Naive thymus-derived CD4-positive, alpha-beta T cell (primary cell): ENCODE measurements at regions of chr2 and their contacts with region 1.

Region 1: GRCh38 chr2:73071360-73072133 is at the start of gene SFXN5:
- DNase-seq: peak; percentile 85 to 98 (median 90)
- ATAC-seq: peak; percentile 93
- H3K4me3 ChIP-seq: peak within 1 kb of the TSS; percentile 98
- H3K4me3 Mint-ChIP-seq: peak within 1 kb of the TSS; percentile 82 to 98 (median 93)
- H3K27ac ChIP-seq: peak within 1 kb of the TSS; percentile 81
- H3K27ac Mint-ChIP-seq: peak within 1 kb of the TSS; percentile 86 to 96 (median 94)
- H3K4me1 ChIP-seq: peaks cover 5 to 7% of the 10 kb centered on the region in 2 donors
- H3K4me1 Mint-ChIP-seq: peaks cover 14 to 39% (median 26%) of the 10 kb centered on the region in 7 donors
- H3K27me3 ChIP-seq: no peaks in the 10 kb centered on the region
- H3K27me3 Mint-ChIP-seq: peaks cover 0 to 18% (median 0%) of the 10 kb centered on the region in 5 donors
- total RNA-seq, gene SFXN5: 8.8 to 17.4 (median 10.9) TPM

Region 2: DNA sequence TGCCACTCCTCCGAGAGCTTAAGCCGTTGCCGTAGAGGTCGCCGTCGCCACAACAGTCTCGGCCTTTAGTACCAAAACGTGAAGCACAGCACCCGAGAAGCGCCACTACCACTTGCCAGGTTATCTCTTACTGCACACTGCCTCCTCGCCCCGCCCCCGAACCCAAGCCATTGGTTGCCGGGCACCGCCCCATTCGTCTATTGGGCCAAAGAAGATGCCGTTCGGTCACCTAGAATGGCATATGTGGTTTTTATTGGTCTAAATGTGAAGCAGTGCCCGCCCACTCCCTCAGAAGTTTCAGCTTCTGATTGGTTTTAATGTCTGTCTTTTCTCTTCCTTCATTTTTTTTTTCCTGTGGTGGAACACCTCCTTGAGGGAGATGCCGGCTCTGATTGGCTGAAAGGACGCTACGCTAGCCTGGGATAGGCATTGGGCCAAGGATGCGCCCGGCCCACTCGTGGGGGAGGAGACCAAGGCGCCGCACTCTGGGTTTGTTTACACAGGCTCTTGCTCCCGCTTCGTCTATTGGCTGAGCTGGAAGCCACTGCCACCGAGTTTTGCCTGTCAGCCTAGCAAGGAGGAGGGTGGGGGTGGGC is 1844.5 kb before region 1 on chr2 and contains the start of gene PAIP2B:
- CTCF ChIA-PET with region 1: no interaction called
- POLR2A ChIA-PET with region 1: no interaction called
- intact Hi-C with region 1: loop called in 1 of 2 experiments (anchors 2 kb)
- DNase-seq: peak; percentile 88 to 99 (median 99)
- ATAC-seq: peak; percentile 95
- H3K4me3 ChIP-seq: peak within 1 kb of the TSS; percentile 80
- H3K4me3 Mint-ChIP-seq: peak within 1 kb of the TSS; percentile 92 to 99 (median 97)
- H3K27ac ChIP-seq: peak within 1 kb of the TSS; percentile 82
- H3K27ac Mint-ChIP-seq: peak within 1 kb of the TSS; percentile 84 to 98 (median 92)
- H3K4me1 ChIP-seq: peaks cover 8 to 11% of the 10 kb centered on the region in 2 donors
- H3K4me1 Mint-ChIP-seq: peaks cover 13 to 34% (median 22%) of the 10 kb centered on the region in 7 donors
- H3K27me3 ChIP-seq: no peaks in the 10 kb centered on the region
- H3K27me3 Mint-ChIP-seq: peaks cover 0 to 28% (median 6%) of the 10 kb centered on the region in 5 donors
- total RNA-seq, gene PAIP2B: 1.3 to 14.1 (median 5.0) TPM

Region 3: GRCh38 chr2:72915907-72916742 is 155.4 kb before region 1 on chr2:
- CTCF ChIA-PET with region 1: no interaction called
- POLR2A ChIA-PET with region 1: no interaction called
- intact Hi-C with region 1: loop called in 1 of 2 experiments (anchors 1 kb)
- DNase-seq: peak in 7 of 9 donors; percentile 27 to 53 (median 41)
- ATAC-seq: peak; percentile 62
- H3K4me3 ChIP-seq: peak overlapping the region; percentile 47
- H3K4me3 Mint-ChIP-seq: peak overlapping the region; percentile 56 to 89 (median 82)
- H3K27ac ChIP-seq: no peak overlapping the region
- H3K27ac Mint-ChIP-seq: no peak overlapping the region
- H3K4me1 ChIP-seq: peaks cover 13 to 31% of the 10 kb centered on the region in 2 donors
- H3K4me1 Mint-ChIP-seq: peaks cover 8 to 32% (median 28%) of the 10 kb centered on the region in 7 donors
- H3K27me3 ChIP-seq: peaks cover 17 to 44% of the 10 kb centered on the region in 2 donors
- H3K27me3 Mint-ChIP-seq: peaks cover 57 to 83% (median 58%) of the 10 kb centered on the region in 5 donors

Region 4: GRCh38 chr2:73085691-73086360 is 14.3 kb after region 1 on chr2:
- CTCF ChIA-PET with region 1: interaction called, 4 read pairs
- POLR2A ChIA-PET with region 1: no interaction called
- intact Hi-C with region 1: loop called in 1 of 2 experiments (anchors 1 kb)
- DNase-seq: peak; percentile 52 to 79 (median 71)
- ATAC-seq: peak; percentile 92
- H3K4me3 ChIP-seq: no peak overlapping the region
- H3K4me3 Mint-ChIP-seq: no peak overlapping the region
- H3K27ac ChIP-seq: no peak overlapping the region
- H3K27ac Mint-ChIP-seq: peak overlapping the region in 1 of 9 donors; percentile 13
- H3K4me1 ChIP-seq: no peaks in the 10 kb centered on the region
- H3K4me1 Mint-ChIP-seq: peaks cover 0 to 2% (median 0%) of the 10 kb centered on the region in 7 donors
- H3K27me3 ChIP-seq: no peaks in the 10 kb centered on the region
- H3K27me3 Mint-ChIP-seq: no peaks in the 10 kb centered on the region

Region 5: GRCh38 chr2:73176881-73177644 is 105.5 kb after region 1 on chr2:
- CTCF ChIA-PET with region 1: interaction called, 9 read pairs
- POLR2A ChIA-PET with region 1: no interaction called
- intact Hi-C with region 1: loop called (anchors 1 to 5 kb)
- DNase-seq: peak; percentile 74 to 92 (median 88)
- ATAC-seq: peak; percentile 96
- H3K4me3 ChIP-seq: peak overlapping the region; percentile 67
- H3K4me3 Mint-ChIP-seq: peak overlapping the region; percentile 83 to 92 (median 90)
- H3K27ac ChIP-seq: no peak overlapping the region
- H3K27ac Mint-ChIP-seq: peak overlapping the region in 5 of 9 donors; percentile 28 to 88 (median 51)
- H3K4me1 ChIP-seq: peaks cover 15 to 20% of the 10 kb centered on the region in 2 donors
- H3K4me1 Mint-ChIP-seq: peaks cover 9 to 17% (median 12%) of the 10 kb centered on the region in 7 donors
- H3K27me3 ChIP-seq: peaks cover 0 to 3% of the 10 kb centered on the region in 2 donors
- H3K27me3 Mint-ChIP-seq: peaks cover 22 to 72% (median 29%) of the 10 kb centered on the region in 5 donors

Region 6: DNA sequence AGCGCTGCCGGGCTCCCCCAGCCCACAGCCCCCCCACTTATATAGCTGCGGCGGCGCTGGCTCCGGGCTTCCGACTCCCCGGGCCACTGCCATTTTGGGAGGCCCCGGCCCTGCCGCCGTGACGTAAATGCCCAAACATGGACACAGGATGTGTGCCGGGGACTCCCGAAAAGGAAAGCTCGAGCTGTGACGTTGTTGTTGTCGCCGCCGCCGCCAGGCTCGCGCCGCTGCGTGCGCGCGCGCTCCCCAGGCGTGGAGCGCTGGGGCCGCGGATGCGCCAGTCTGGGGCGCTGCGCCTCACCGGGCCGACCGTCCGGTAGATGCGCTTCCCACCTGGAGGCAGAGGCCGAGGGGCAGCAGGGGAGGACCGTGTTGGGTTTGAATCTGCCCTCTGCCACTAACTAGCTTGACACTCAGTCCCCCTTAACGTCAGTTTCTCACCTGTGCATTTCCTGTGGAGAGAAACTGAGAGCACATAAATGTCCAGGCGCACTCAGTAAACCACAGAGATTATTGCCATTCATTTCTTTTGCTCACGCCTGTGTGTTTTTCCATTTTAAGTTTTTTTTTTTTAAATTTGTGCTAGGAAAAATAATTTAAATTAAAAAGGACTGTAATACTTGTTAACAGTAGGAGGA is 222.1 kb after region 1 on chr2 and contains the start of gene EGR4:
- CTCF ChIA-PET with region 1: no interaction called
- POLR2A ChIA-PET with region 1: no interaction called
- intact Hi-C with region 1: loop called in 1 of 2 experiments (anchors 2 kb)
- DNase-seq: peak; percentile 70 to 96 (median 88)
- ATAC-seq: peak; percentile 94
- H3K4me3 ChIP-seq: peak within 1 kb of the TSS; percentile 72
- H3K4me3 Mint-ChIP-seq: peak within 1 kb of the TSS; percentile 59 to 82 (median 72)
- H3K27ac ChIP-seq: no peak within 1 kb of the TSS
- H3K27ac Mint-ChIP-seq: peak within 1 kb of the TSS in 4 of 9 donors; percentile 9 to 81 (median 30)
- H3K4me1 ChIP-seq: peaks cover 17 to 18% of the 10 kb centered on the region in 2 donors
- H3K4me1 Mint-ChIP-seq: peaks cover 7 to 25% (median 14%) of the 10 kb centered on the region in 7 donors
- H3K27me3 ChIP-seq: peaks cover 11 to 25% of the 10 kb centered on the region in 2 donors
- H3K27me3 Mint-ChIP-seq: peaks cover 48 to 83% (median 66%) of the 10 kb centered on the region in 5 donors
- total RNA-seq, gene EGR4: 0.15 to 0.16 (median 0.15) TPM in 3 of 5 experiments, not detected in the others

Region 7: GRCh38 chr2:74458132-74458925 is 1386.8 kb after region 1 on chr2 and contains the start of gene WBP1:
- CTCF ChIA-PET with region 1: no interaction called
- POLR2A ChIA-PET with region 1: no interaction called
- intact Hi-C with region 1: loop called in 1 of 2 experiments (anchors 5 kb)
- DNase-seq: peak in 8 of 9 donors; percentile 85 to 100 (median 100)
- ATAC-seq: peak; percentile 89
- H3K4me3 ChIP-seq: peak within 1 kb of the TSS; percentile 70
- H3K4me3 Mint-ChIP-seq: peak within 1 kb of the TSS; percentile 87 to 99 (median 96)
- H3K27ac ChIP-seq: peak within 1 kb of the TSS; percentile 100
- H3K27ac Mint-ChIP-seq: peak within 1 kb of the TSS; percentile 88 to 100 (median 99)
- H3K4me1 ChIP-seq: peaks cover 30 to 34% of the 10 kb centered on the region in 2 donors
- H3K4me1 Mint-ChIP-seq: peaks cover 38 to 68% (median 58%) of the 10 kb centered on the region in 7 donors
- H3K27me3 ChIP-seq: no peaks in the 10 kb centered on the region
- H3K27me3 Mint-ChIP-seq: peaks cover 0 to 2% (median 0%) of the 10 kb centered on the region in 5 donors
- total RNA-seq, gene WBP1: 53.6 to 127 (median 85.4) TPM